IMR-90 (cell line): ENCODE measurements at regions of chr17 and their contacts with region 1.

Region 1: GRCh38 chr17:44137891-44138709 is 3.6 kb upstream of the HROB start:
- DNase-seq: peak; percentile 100
- ATAC-seq: peak; percentile 95
- H3K4me3 ChIP-seq: peak overlapping the region; percentile 24; the same call in 1 of the 2 replicates
- H3K27ac ChIP-seq: peak overlapping the region; percentile 78
- H3K4me1 ChIP-seq: peaks cover 10% of the 10 kb centered on the region
- H3K27me3 ChIP-seq: no peaks in the 10 kb centered on the region
- CTCF ChIP-seq: no peak
- POLR2A ChIP-seq: peak; percentile 66; the same call in 1 of the 2 replicates
- RAD21 ChIP-seq: no peak; the same call in none of the 2 replicates

Region 2: DNA sequence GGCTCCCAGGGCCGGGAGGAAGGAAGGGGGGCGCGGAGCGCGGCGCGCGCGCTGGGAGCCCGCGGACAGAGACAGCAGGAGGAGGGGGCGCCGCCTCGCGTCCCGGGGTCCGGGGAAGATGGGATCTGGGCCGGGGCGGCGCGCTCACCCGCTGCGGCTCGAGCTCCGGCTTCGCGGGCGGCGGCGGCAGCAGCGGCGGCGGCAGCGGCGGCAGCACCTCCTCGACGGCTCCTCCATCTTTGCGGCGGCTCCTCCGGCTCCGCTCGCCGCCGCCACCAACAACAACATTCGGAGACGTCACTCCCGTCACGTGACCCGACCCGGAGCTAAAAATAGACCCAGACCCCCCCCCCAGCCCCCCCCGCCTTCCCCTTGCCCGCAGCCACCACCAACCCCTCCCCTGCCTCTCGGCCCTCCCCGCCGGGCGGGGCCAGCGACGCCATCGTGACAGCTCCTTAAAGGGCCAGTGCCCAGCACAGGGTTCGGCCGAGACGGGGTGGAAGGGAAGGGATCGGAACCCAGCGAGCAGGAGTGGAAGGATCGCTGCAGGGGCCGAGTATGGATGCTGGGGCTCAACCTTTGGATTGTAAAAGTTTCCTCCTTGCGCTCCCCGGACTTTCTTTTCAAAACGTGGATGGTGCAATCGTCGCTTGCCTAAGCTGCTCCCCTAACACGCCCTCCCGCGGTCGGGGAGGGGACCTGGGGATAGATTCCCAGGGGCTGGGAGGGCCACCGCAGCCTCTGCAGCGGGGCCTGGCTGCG is 14.6 kb before region 1 on chr17 and contains the start of gene HDAC5:
- CTCF ChIA-PET with region 1: interaction called, 5 read pairs
- POLR2A ChIA-PET with region 1: no interaction called
- dilution Hi-C with region 1: no loop called
- in situ Hi-C with region 1: no loop called
- intact Hi-C with region 1: loop called (anchors 1 kb)
- DNase-seq: peak; percentile 91
- ATAC-seq: peak; percentile 99
- H3K4me3 ChIP-seq: peak within 1 kb of the TSS; percentile 78
- H3K27ac ChIP-seq: peak within 1 kb of the TSS; percentile 83
- H3K4me1 ChIP-seq: peaks cover 5% of the 10 kb centered on the region; the same call in 1 of the 2 replicates
- H3K27me3 ChIP-seq: no peaks in the 10 kb centered on the region
- CTCF ChIP-seq: peak; percentile 61
- POLR2A ChIP-seq: peak; percentile 26; the same call in 1 of the 2 replicates
- RAD21 ChIP-seq: peak; percentile 49
- total RNA-seq, gene HDAC5: 61.3 and 71.4 TPM in 2 replicates